ENCODE measurements at regions of chr15 and their contacts with region 1.

Region 1: GRCh38 chr15:88467073-88467934 is at the starts of genes MRPL46 and MRPS11:
- DNase-seq: peak; percentile 71 to 81
- H3K4me3 ChIP-seq: peak within 1 kb of the TSS; percentile 87
- H3K27ac ChIP-seq: peak within 1 kb of the TSS; percentile 86
- H3K4me1 ChIP-seq: peaks cover 24% of the 10 kb centered on the region
- H3K27me3 ChIP-seq: no peaks in the 10 kb centered on the region
- CTCF ChIP-seq: no peak
- total RNA-seq, gene MRPL46: 25.7 and 32.7 TPM in 2 replicates
- total RNA-seq, gene MRPS11: 38.1 and 57.2 TPM in 2 replicates

Region 2: DNA sequence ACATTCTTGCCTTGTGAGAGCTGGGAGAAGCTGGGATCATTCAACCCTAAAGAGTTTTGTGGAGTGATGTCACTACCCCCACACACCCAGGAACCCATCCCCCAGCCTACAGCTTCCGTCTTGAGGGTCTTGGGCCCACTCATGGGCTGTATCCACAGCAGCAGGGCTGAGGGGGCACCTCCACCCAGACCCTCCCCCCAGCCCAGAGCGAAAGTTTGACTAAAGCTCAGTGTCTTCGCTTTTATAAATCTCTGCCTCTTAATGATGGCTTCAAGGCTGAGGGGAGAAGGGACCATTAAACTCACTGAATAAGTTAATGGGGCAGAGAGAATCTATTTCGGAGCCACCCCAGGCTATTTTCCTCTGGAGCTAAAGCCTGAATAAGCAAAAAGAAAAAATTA is 234.5 kb before region 1 on chr15:
- CTCF ChIA-PET with region 1: no interaction called
- POLR2A ChIA-PET with region 1: no interaction called
- intact Hi-C with region 1: no loop called
- DNase-seq: no peak
- H3K4me3 ChIP-seq: no peak overlapping the region
- H3K27ac ChIP-seq: no peak overlapping the region
- H3K4me1 ChIP-seq: no peaks in the 10 kb centered on the region
- H3K27me3 ChIP-seq: peaks cover 5% of the 10 kb centered on the region; the same call in 1 of the 2 replicates
- CTCF ChIP-seq: no peak

Region 3: GRCh38 chr15:88546248-88547129 is 79.2 kb after region 1 on chr15 and contains the start of gene DET1:
- CTCF ChIA-PET with region 1: no interaction called
- POLR2A ChIA-PET with region 1: no interaction called
- intact Hi-C with region 1: loop called (anchors 2 kb)
- DNase-seq: peak; percentile 87 to 91
- H3K4me3 ChIP-seq: peak within 1 kb of the TSS; percentile 76
- H3K27ac ChIP-seq: no peak within 1 kb of the TSS; the same call in 1 of the 2 replicates
- H3K4me1 ChIP-seq: peaks cover 6% of the 10 kb centered on the region; the same call in 1 of the 2 replicates
- H3K27me3 ChIP-seq: no peaks in the 10 kb centered on the region
- CTCF ChIP-seq: peak; percentile 68; the same call in 1 of the 2 replicates
- total RNA-seq, gene DET1: 2.9 and 3.7 TPM in 2 replicates

Region 4: GRCh38 chr15:88615303-88616107 is 148.2 kb after region 1 on chr15:
- CTCF ChIA-PET with region 1: no interaction called
- POLR2A ChIA-PET with region 1: no interaction called
- intact Hi-C with region 1: loop called (anchors 2 kb)
- DNase-seq: no peak
- H3K4me3 ChIP-seq: no peak overlapping the region
- H3K27ac ChIP-seq: no peak overlapping the region
- H3K4me1 ChIP-seq: no peaks in the 10 kb centered on the region
- H3K27me3 ChIP-seq: no peaks in the 10 kb centered on the region
- CTCF ChIP-seq: no peak

Measured in PC-9 (cell line).